HAP-1 (cell line): ENCODE measurements at regions of chr15 and their contacts with region 1.

Region 1: GRCh38 chr15:39756806-39757522 is 25.7 kb downstream of the FSIP1 start:
- DNase-seq: peak; percentile 59 to 69
- H3K4me3 ChIP-seq: no peak overlapping the region
- H3K4me1 ChIP-seq: no peaks in the 10 kb centered on the region
- H3K27me3 ChIP-seq: no peaks in the 10 kb centered on the region

Region 2: DNA sequence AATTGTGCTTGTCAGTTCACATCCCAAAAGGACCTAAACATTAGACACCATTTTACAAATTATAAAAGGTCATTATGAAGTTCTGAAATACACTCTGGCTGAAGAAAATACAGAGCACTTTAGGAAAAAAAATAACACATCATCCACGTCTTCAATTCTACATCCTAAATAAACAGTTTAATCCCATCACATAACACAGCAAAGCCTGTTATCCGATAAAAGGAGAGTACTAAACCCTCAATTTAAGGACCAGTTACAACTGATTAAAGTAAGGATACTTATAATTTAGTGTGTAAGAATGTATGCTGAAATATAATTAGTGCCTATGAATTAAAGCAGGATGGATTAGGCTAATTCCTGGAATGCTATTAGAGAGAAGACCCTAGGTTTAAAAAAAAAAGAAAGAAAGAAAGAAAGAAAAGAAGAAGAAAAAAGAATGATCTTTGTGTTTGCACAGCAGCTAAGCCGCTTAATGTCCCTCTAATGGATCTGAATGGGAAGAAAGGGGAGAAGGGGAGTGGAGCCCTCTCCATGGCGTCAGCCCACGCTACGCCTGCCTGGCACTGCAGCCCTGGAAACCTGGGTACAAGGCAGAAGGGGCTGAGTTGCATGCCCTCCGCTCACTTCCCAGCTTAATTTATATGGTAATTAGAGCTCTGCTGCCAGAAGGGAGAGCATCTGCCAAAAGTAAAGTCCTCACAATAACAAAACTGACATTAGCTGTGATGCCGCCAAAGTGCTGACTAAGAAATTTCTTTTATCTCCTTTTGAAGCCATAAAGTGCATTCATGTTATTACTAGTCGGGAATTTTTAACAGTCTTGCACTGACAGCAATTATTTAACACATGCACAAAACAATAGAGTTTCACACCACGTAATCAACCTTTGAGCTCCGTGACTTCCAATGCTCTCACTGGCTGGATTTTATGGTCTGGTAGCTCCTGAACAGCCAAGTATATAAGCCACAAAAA is 64.3 kb before region 1 on chr15:
- in situ Hi-C with region 1: loop called (anchors 5 kb)
- DNase-seq: peak; percentile 91 to 98
- H3K4me3 ChIP-seq: no peak overlapping the region
- H3K4me1 ChIP-seq: peaks cover 30% of the 10 kb centered on the region
- H3K27me3 ChIP-seq: no peaks in the 10 kb centered on the region

Region 3: GRCh38 chr15:40357723-40358470 is 600.9 kb after region 1 on chr15 and contains the start of gene DISP2:
- in situ Hi-C with region 1: no loop called
- DNase-seq: peak; percentile 80 to 93
- H3K4me3 ChIP-seq: peak within 1 kb of the TSS; percentile 44
- H3K4me1 ChIP-seq: peaks cover 4% of the 10 kb centered on the region
- H3K27me3 ChIP-seq: no peaks in the 10 kb centered on the region